ENCODE measurements at regions of chr17 and their contacts with region 1.

Region 1: DNA sequence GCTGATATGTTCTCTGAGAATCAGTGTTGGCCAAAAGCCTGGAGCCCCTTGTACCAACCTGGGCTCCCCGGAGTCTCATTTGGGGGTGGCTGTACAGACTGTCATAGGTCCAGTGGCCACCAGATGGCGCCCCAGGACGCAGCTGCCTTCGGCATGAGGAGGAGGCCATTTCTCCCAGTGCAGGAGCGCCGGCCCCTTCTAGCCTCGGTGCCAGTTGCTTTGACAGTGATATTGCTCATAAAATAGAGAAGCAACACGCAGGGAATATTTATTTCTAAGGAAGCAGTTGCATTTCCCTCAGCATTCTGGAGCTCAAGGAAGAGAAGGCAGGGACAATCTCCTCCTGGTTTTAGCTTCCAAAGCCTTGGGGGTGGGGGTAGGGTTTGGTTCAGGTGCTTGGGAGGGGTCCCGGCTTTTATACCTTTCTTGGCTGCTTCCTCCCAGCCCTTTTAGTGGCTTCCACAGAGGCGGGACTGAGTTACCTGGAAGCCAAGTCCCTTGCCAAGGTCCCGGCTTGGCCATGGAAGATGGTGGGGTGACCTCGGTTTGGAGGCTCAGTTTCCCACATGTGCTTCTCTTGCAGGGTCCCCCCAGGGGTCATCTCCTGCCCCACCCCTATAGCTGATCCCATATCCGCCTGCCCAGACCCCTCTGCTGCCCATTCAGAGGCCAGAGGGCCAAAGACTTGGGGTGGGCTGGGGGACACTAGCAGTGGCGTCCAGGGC is 117.8 kb upstream of the CDC42EP4 start:
- DNase-seq: peak; percentile 46 to 98
- H3K4me3 ChIP-seq: no peak overlapping the region
- H3K27ac ChIP-seq: no peak overlapping the region
- H3K4me1 ChIP-seq: peaks cover 0 to 6% (median 1%) of the 10 kb centered on the region in 4 experiments; a peak in 3 of 7 replicates
- H3K27me3 ChIP-seq: no peaks in the 10 kb centered on the region
- CTCF ChIP-seq: peak; percentile 92 to 97 (median 92)
- EP300 ChIP-seq: no peak
- POLR2A ChIP-seq: no peak
- RAD21 ChIP-seq: peak; percentile 96 to 98

Region 2: DNA sequence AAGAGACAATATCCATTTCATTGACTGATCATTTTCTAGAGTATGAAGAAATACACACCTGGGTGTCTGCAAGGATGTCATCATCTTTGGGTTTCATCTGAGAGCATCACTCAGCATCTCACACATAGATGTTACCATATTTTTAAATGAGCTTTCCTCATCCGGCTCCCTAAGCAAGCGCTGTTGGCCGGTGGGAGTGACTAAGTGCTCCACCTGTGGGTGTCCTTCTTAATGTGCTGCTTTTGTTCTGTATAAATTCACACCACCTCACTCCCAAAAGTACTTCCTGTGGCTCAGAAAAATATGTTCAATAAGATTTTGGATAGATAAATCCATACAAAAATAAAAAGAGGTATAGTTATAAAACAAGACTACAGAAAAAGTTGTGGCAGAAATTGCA is 257.4 kb before region 1 on chr17:
- CTCF ChIA-PET with region 1: no interaction called
- POLR2A ChIA-PET with region 1: no interaction called
- DNase-seq: no peak
- H3K4me3 ChIP-seq: no peak overlapping the region
- H3K27ac ChIP-seq: no peak overlapping the region
- H3K4me1 ChIP-seq: peaks cover 0 to 5% (median 3%) of the 10 kb centered on the region in 4 experiments; a peak in 3 of 7 replicates
- H3K27me3 ChIP-seq: peaks cover under 1 to 8% (median 5%) of the 10 kb centered on the region in 4 experiments; a peak in 6 of 7 replicates
- CTCF ChIP-seq: no peak
- EP300 ChIP-seq: no peak
- POLR2A ChIP-seq: no peak
- RAD21 ChIP-seq: peak; percentile 6 to 7; a peak in 1 of 4 replicates

Region 3: DNA sequence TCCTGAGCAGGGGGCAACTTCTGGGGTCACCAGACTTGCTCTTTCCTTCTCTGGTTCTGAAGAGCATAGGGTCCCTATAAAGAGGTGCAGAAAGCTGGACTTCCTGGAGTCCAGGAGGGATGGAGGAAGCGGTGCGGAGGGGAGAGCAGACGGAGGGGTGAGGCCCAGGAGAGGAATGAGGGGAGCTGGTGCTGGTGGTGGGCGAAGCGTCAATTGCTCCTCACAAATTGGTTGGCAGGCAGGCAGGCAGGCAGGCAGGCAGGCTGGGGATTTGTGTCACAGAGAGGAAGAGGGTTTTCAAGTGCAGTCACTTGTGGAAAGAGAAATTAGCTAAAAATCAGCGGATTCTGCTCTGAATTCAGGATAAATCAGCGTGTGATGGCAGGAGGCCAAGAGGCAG is 15.9 kb after region 1 on chr17:
- CTCF ChIA-PET with region 1: interaction called, 23 read pairs
- POLR2A ChIA-PET with region 1: interaction called, 3 read pairs
- DNase-seq: no peak
- H3K4me3 ChIP-seq: no peak overlapping the region
- H3K27ac ChIP-seq: no peak overlapping the region
- H3K4me1 ChIP-seq: no peaks in the 10 kb centered on the region
- H3K27me3 ChIP-seq: peaks cover 0 to 2% (median 0%) of the 10 kb centered on the region in 4 experiments; a peak in 1 of 7 replicates
- CTCF ChIP-seq: no peak
- EP300 ChIP-seq: no peak
- POLR2A ChIP-seq: no peak
- RAD21 ChIP-seq: no peak

Region 4: DNA sequence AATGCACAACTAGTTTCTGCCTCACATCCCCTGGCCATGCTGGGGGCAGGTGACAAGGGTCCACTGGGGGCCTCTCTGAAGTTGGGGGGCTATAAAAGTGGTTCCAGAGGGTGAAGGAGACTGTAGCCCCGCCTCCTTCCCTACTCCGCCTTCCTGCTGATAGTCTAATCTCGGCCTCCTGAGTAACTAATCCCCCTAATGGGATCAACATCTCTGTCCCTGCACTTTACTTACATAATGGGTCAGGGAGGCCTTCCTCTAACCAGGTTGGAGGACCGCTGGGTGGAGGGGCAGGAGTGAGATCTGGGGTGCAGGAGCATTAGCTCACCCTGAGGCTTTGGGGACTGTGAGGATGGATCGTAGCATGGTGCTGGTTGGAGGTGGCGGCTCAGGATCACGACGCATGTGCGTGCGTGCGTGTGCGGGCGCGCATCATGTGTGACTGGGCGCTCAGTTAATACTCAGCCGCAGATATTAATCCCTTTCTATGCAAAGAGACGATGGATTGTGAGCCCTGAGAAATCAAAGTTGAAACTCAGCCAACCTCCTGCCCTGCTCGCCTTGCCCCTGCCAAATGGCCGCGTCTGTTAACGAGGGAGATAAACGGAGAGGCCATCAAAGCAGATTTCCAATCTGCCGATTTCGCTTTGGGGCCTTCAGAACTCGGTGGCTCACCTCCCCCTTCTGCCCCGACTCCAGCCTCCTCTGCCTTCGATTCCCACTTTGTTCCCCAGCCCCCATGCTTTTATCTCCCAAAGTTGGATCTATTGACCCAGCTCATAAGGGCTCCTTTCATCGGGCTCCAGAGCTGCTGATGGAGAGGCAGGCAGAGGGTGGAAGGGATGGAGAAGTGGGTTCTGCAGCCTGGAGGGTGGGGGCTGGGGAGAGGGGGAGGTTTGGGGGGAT is 107.4 kb after region 1 on chr17:
- CTCF ChIA-PET with region 1: interaction called, 10 read pairs
- POLR2A ChIA-PET with region 1: no interaction called
- DNase-seq: no peak
- H3K4me3 ChIP-seq: no peak overlapping the region
- H3K27ac ChIP-seq: no peak overlapping the region
- H3K4me1 ChIP-seq: peaks cover 0 to 30% (median 13%) of the 10 kb centered on the region in 4 experiments; a peak in 6 of 7 replicates
- H3K27me3 ChIP-seq: no peaks in the 10 kb centered on the region
- CTCF ChIP-seq: no peak
- EP300 ChIP-seq: no peak
- POLR2A ChIP-seq: no peak
- RAD21 ChIP-seq: no peak

Region 5: DNA sequence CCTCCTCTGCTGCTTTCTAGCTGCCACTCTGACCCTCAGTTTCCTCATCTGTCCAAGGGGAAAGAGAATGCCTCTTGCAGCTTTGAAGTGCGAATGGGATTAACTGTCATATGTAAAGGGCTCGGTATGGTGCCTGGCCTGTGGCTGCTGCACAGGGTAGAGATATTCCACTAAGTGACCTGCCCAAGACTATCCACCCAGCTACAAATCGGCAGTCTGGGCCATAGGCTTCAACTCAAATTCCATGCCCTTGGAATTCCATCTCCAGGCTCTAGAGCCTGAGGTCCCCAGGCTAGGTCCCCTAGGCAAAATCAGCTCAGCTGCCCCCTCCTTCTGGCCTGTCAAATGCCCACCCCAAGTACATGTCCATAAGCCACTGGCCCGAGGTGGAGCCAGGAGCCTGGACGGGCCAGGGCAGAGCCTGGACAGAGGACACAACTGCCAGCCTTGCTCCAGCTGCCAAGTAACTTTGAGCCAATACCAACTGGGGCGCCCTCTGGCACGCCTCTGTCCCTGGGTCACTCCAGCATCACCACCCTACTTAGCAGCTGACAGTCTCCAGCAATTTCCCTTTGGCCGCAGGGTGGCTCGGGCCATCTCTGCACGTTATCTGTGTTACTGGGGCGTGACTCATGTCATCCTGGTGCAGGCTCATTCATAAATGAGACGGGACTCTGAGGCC is 157.5 kb after region 1 on chr17:
- CTCF ChIA-PET with region 1: interaction called, 29 read pairs
- POLR2A ChIA-PET with region 1: no interaction called
- DNase-seq: no peak
- H3K4me3 ChIP-seq: no peak overlapping the region; a peak in 1 of 8 replicates
- H3K27ac ChIP-seq: no peak overlapping the region
- H3K4me1 ChIP-seq: peaks cover 0 to 37% (median 13%) of the 10 kb centered on the region in 4 experiments; a peak in 6 of 7 replicates
- H3K27me3 ChIP-seq: no peaks in the 10 kb centered on the region; a peak in 1 of 7 replicates
- CTCF ChIP-seq: no peak
- EP300 ChIP-seq: no peak
- POLR2A ChIP-seq: no peak
- RAD21 ChIP-seq: no peak; a peak in 1 of 4 replicates